Cardiac septum (tissue), 1 donor: ENCODE measurements at regions of chr6 and their contacts with region 1.

Region 1: DNA sequence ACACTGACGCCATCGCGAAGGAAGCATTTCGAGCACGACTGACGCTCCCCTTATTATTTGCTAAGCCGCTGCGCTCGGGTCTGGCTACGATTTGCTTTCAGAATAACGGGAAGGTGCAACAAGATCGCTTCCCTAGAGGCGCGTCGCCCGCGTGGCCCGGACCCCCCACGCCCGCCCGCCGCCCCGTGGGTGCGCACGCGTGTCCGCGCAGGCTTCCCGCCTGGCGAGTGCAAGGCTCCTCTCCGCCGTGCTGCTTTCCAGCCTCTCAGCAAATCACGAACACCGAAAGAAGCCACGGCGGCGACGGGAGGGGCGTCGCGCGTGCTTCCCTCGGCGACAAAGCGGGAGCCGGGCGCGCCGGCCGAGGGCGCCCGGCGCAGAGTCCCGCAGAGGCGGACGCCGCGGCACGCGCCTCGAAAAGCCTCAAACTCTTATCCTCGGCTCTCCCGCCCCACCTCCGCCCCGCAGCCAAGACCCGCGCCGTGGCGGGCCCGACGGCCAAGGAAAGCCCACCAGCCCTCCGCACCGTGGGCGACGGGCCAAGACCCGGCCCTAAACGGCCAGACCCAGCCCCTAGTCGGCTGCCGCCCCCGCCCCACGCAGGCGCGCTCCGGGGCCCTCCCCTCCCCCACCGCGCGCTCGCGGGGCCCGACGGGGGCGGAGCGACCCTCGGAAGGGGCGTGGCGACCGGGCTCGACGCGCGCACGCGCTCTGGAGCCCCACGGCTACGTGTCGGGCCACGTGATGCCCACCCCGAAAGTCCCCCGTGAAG is 987 bp upstream of the QKI start:
- DNase-seq: peak; percentile 96

Region 2: GRCh38 chr6:162856885-162857284 is 556.6 kb before region 1 on chr6:
- intact Hi-C with region 1: loop called (anchors 5 kb)
- DNase-seq: no peak

Region 3: DNA sequence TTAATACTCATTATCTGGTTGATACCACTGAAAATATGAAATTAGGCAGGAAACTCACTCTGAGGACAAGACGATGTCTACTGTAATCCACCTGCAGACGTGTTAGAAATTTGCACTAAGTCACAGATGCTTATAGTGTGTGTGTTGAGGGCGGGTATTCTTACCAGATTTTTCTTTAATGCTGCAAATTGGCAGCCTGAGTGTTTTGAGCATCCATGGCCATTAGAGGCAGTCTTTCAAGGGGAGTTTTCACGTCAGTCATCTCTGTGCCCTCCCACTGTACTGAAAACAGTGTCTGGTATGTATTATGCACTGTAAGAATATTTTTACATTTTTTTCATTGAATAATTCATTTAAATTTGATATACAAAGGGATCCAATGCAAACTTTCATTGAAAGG is 265.5 kb before region 1 on chr6:
- intact Hi-C with region 1: no loop called
- DNase-seq: no peak

Region 4: GRCh38 chr6:163218361-163218894 is 195.1 kb before region 1 on chr6:
- intact Hi-C with region 1: no loop called
- DNase-seq: no peak

Region 5: GRCh38 chr6:163260111-163260895 is 153.2 kb before region 1 on chr6:
- intact Hi-C with region 1: loop called (anchors 5 kb)
- DNase-seq: no peak

Region 6: GRCh38 chr6:163328379-163328778 is 85.2 kb before region 1 on chr6:
- intact Hi-C with region 1: no loop called
- DNase-seq: no peak

Region 7: DNA sequence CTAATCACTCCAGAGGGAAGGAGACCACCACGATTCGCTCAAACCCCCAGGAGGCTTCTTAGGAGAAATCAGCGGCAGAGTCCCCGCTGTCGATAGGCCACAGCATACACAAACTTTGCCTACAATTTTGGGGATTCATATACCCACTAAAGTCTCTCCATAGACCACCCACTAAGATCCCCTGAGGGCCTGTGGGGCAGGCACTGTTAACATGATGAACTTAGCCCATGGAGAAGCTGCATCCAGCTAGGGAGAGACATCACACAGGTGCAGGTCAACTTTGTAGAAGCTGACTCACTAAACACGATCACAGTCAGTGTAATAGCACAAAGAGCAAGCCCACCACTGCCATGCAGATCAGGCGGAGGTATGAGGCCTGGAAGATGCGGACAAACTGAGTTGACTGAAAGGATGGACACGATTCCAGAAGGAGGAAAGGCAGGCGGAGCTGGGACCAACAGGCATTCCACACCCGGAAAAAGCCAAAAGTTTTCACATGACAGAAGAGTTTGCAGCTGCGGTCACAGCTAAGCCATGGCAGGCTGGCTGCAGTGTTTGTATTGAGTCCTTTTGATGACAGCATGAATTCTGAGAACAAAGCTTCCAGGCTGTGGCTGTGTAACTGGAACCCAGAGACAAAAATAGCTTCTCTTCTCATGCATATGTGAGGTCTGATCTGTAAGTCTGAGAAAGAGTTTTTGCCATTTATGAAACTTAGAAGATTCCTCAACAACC is 74.7 kb before region 1 on chr6:
- intact Hi-C with region 1: loop called (anchors 1 kb)
- DNase-seq: peak; percentile 82

Region 8: DNA sequence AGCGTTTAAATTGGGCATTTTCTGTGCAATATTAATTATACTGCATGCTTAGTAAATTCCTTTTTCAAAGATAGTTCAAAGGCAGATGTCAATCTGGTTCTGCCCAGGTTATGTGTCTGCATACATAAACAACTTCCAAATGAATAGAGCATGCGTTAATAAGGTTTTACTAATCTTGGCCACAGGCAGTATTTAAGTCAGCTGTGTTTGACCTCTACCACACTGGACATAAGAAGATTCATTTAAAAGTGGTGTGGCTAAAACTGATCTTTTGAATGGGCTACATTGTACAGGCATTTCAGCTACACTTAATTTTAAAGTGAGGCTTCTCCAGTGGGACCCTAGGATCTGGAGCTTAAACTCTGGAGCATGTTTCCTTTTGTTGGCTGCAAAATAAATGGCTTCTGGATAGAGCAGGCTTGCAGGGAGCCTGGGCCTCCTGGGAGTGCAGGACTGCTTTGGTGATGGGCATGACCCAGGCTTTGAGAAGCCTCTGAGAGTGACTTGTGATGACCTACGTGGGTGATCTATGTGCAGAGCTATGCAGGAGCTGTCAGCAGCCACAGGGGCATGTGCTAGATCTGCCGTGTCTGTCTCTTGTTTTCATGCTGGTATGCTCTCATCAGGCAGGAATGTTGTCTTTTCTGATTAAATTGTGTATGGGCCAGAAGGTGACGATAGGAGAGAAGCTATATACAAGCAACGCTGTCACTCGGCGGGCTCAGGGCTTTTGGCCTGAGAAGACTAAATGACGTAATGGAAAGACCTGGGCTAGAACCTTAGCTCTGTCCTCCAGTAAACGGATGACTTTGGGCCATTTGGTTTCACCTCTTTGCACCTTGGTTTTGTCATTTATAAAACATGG is 332.2 kb after region 1 on chr6:
- intact Hi-C with region 1: loop called (anchors 5 kb)
- DNase-seq: peak; percentile 85

Region 9: GRCh38 chr6:163883984-163884383 is 470.5 kb after region 1 on chr6:
- intact Hi-C with region 1: no loop called
- DNase-seq: no peak